ENCODE measurements at regions of chr1 and their contacts with region 1.

Region 1: GRCh38 chr1:167220537-167221125 is at the start of gene POU2F1:
- DNase-seq: peak; percentile 94
- H3K4me3 ChIP-seq: peak within 1 kb of the TSS; percentile 99
- H3K27ac ChIP-seq: peak within 1 kb of the TSS; percentile 65
- H3K27me3 ChIP-seq: no peaks in the 10 kb centered on the region
- CTCF ChIP-seq: peak; percentile 59
- polyA plus RNA-seq, gene POU2F1: 2.7 and 2.8 TPM in 2 replicates

Region 2: GRCh38 chr1:167198518-167199133 is 22.0 kb before region 1 on chr1:
- CTCF ChIA-PET with region 1: interaction called, 26 read pairs
- POLR2A ChIA-PET with region 1: no interaction called
- DNase-seq: no peak
- H3K4me3 ChIP-seq: no peak overlapping the region
- H3K27ac ChIP-seq: no peak overlapping the region
- H3K27me3 ChIP-seq: peaks cover 6% of the 10 kb centered on the region
- CTCF ChIP-seq: no peak

Region 3: GRCh38 chr1:167263819-167264464 is 43.3 kb after region 1 on chr1:
- CTCF ChIA-PET with region 1: interaction called, 45 read pairs
- POLR2A ChIA-PET with region 1: no interaction called
- DNase-seq: no peak
- H3K4me3 ChIP-seq: no peak overlapping the region
- H3K27ac ChIP-seq: no peak overlapping the region
- H3K27me3 ChIP-seq: no peaks in the 10 kb centered on the region
- CTCF ChIP-seq: no peak

Region 4: GRCh38 chr1:167328816-167329483 is 108.3 kb after region 1 on chr1:
- CTCF ChIA-PET with region 1: interaction called, 11 read pairs
- POLR2A ChIA-PET with region 1: no interaction called
- DNase-seq: no peak
- H3K4me3 ChIP-seq: no peak overlapping the region
- H3K27ac ChIP-seq: no peak overlapping the region
- H3K27me3 ChIP-seq: no peaks in the 10 kb centered on the region
- CTCF ChIP-seq: no peak

Region 5: DNA sequence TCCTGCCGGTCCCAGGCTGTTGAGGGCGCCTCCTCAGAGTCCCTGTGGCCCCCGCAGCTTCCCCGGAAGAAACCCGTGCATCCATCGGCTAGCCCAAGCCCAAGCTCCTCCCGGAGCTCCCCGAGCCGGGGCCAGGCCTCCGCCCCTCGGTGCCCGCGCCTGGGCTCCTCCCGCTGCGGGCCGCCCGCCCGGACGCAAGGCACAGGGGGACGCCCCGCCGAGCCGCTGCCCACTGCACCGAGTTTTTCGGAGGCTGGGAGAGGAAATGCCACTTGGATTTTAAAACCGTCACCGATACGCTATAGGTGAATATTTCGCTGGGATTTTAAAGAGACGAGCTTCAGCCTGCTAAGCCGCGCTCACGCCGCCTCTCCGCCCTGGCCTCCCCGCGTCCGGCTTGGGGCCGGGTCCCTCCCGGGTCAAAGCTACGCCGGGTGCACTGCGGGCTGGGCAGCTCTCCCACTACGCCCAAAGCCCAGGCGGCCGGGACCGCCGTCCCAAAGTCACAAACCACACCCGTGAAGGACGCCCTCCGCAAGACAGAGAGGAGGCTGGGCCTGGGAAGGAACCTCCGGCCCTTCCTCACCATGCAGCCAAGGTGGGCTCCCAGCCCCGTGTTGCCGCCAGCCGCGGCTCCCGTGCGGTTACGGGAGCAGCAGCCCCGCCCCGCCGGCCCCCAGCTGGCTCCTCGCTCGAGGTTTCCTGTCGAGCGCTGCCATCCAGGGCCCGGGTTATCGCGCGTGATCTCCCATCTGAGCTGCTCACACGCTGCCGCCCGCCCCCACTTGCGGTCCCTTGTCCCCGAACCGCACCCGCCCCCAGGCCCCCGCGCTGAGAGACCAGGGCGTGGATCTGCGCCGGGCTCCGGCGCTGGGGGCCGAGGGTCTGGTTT is 234.5 kb after region 1 on chr1:
- CTCF ChIA-PET with region 1: interaction called, 17 read pairs
- POLR2A ChIA-PET with region 1: interaction called, 3 read pairs
- DNase-seq: no peak
- H3K4me3 ChIP-seq: peak overlapping the region; percentile 70
- H3K27ac ChIP-seq: no peak overlapping the region
- H3K27me3 ChIP-seq: peaks cover 24% of the 10 kb centered on the region
- CTCF ChIP-seq: no peak

Region 6: GRCh38 chr1:167553136-167554027 is 332.8 kb after region 1 on chr1 and contains the start of gene CREG1:
- CTCF ChIA-PET with region 1: interaction called, 12 read pairs
- POLR2A ChIA-PET with region 1: interaction called, 3 read pairs
- DNase-seq: peak; percentile 59
- H3K4me3 ChIP-seq: peak within 1 kb of the TSS; percentile 60
- H3K27ac ChIP-seq: no peak within 1 kb of the TSS
- H3K27me3 ChIP-seq: peaks cover 10% of the 10 kb centered on the region
- CTCF ChIP-seq: no peak
- polyA plus RNA-seq, gene CREG1: 23.1 and 31.2 TPM in 2 replicates

Region 7: GRCh38 chr1:167594822-167595221 is 374.2 kb after region 1 on chr1:
- CTCF ChIA-PET with region 1: no interaction called
- POLR2A ChIA-PET with region 1: no interaction called
- DNase-seq: no peak
- H3K4me3 ChIP-seq: no peak overlapping the region
- H3K27ac ChIP-seq: no peak overlapping the region
- H3K27me3 ChIP-seq: peaks cover 6% of the 10 kb centered on the region
- CTCF ChIP-seq: no peak